MCF 10A (cell line): ENCODE measurements at regions of chr7 and their contacts with region 1.

Region 1: GRCh38 chr7:24812310-24812945 is 55.2 kb upstream of the GSDME start:
- DNase-seq: peak; percentile 60
- H3K4me3 Mint-ChIP-seq: no peak overlapping the region
- H3K27ac Mint-ChIP-seq: no peak overlapping the region
- H3K4me1 Mint-ChIP-seq: peaks cover 3% of the 10 kb centered on the region
- H3K27me3 Mint-ChIP-seq: no peaks in the 10 kb centered on the region
- CTCF ChIP-seq: peak; percentile 82

Region 2: DNA sequence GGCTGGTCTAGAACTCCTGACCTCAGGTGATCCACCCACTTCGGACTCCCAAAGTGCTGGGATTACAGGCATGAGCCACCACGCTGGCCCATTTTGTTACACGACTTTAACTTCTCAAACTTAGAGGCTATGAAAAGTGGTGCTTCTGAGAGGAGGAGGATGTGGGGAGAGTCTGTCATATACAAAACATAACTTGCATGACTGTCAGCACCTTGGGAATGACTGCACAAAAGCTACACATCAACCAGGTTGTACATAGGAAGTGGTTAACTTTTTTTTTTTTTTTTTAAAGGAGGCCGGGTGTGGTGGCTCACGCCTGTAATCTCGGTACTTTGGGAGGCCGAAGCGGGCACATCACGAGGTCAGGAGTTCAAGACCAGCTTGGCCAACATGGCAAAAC is 11.8 kb before region 1 on chr7:
- CTCF ChIA-PET with region 1: interaction called, 27 read pairs
- POLR2A ChIA-PET with region 1: interaction called, 4 read pairs
- intact Hi-C with region 1: no loop called
- DNase-seq: no peak
- H3K4me3 Mint-ChIP-seq: no peak overlapping the region
- H3K27ac Mint-ChIP-seq: no peak overlapping the region
- H3K4me1 Mint-ChIP-seq: no peaks in the 10 kb centered on the region
- H3K27me3 Mint-ChIP-seq: no peaks in the 10 kb centered on the region
- CTCF ChIP-seq: no peak

Region 3: GRCh38 chr7:24825931-24826661 is 13.7 kb after region 1 on chr7:
- CTCF ChIA-PET with region 1: interaction called, 24 read pairs
- POLR2A ChIA-PET with region 1: interaction called, 7 read pairs
- intact Hi-C with region 1: no loop called
- DNase-seq: peak; percentile 94
- H3K4me3 Mint-ChIP-seq: peak overlapping the region; percentile 54
- H3K27ac Mint-ChIP-seq: peak overlapping the region; percentile 88
- H3K4me1 Mint-ChIP-seq: peaks cover 62% of the 10 kb centered on the region
- H3K27me3 Mint-ChIP-seq: no peaks in the 10 kb centered on the region
- CTCF ChIP-seq: no peak

Region 4: GRCh38 chr7:24869572-24869971 is 57.1 kb after region 1 on chr7:
- CTCF ChIA-PET with region 1: no interaction called
- POLR2A ChIA-PET with region 1: no interaction called
- intact Hi-C with region 1: no loop called
- DNase-seq: no peak
- H3K4me3 Mint-ChIP-seq: no peak overlapping the region
- H3K27ac Mint-ChIP-seq: no peak overlapping the region
- H3K4me1 Mint-ChIP-seq: no peaks in the 10 kb centered on the region
- H3K27me3 Mint-ChIP-seq: no peaks in the 10 kb centered on the region
- CTCF ChIP-seq: no peak

Region 5: DNA sequence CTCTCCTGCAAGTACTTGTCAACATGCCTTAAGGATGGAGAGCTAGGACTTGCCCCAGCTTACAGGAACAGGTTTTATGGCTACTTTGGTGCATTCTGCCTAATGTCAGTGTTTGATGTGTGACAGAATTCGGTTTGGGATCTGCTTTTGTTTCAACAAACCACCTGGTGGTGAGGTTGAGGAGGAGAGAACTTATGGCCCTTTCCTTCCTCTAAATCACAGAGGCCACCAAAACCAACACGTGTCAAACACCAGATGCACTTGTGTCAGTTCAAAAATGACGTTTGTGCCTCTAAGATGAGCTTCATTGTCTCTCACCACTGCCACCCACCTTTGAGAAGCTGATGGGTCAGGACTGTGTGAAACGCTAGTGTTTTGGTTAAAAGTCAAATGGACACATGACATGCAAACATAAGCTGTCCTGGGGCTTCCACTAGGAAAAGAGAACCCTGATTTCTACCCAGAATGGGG is 83.6 kb after region 1 on chr7:
- CTCF ChIA-PET with region 1: interaction called, 11 read pairs
- POLR2A ChIA-PET with region 1: no interaction called
- intact Hi-C with region 1: no loop called
- DNase-seq: no peak
- H3K4me3 Mint-ChIP-seq: no peak overlapping the region
- H3K27ac Mint-ChIP-seq: no peak overlapping the region
- H3K4me1 Mint-ChIP-seq: peaks cover 20% of the 10 kb centered on the region
- H3K27me3 Mint-ChIP-seq: no peaks in the 10 kb centered on the region
- CTCF ChIP-seq: no peak

Region 6: GRCh38 chr7:24991353-24991752 is 178.9 kb after region 1 on chr7:
- CTCF ChIA-PET with region 1: interaction called, 11 read pairs
- POLR2A ChIA-PET with region 1: interaction called, 3 read pairs
- intact Hi-C with region 1: no loop called
- DNase-seq: no peak
- H3K4me3 Mint-ChIP-seq: no peak overlapping the region
- H3K27ac Mint-ChIP-seq: no peak overlapping the region
- H3K4me1 Mint-ChIP-seq: no peaks in the 10 kb centered on the region
- H3K27me3 Mint-ChIP-seq: no peaks in the 10 kb centered on the region
- CTCF ChIP-seq: no peak

Region 7: GRCh38 chr7:25054819-25055519 is 242.5 kb after region 1 on chr7:
- CTCF ChIA-PET with region 1: interaction called, 10 read pairs
- POLR2A ChIA-PET with region 1: no interaction called
- intact Hi-C with region 1: no loop called
- DNase-seq: no peak
- H3K4me3 Mint-ChIP-seq: no peak overlapping the region
- H3K27ac Mint-ChIP-seq: no peak overlapping the region
- H3K4me1 Mint-ChIP-seq: peaks cover 9% of the 10 kb centered on the region
- H3K27me3 Mint-ChIP-seq: no peaks in the 10 kb centered on the region
- CTCF ChIP-seq: no peak

Region 8: GRCh38 chr7:25069900-25070443 is 257.5 kb after region 1 on chr7:
- CTCF ChIA-PET with region 1: interaction called, 34 read pairs
- POLR2A ChIA-PET with region 1: no interaction called
- intact Hi-C with region 1: loop called (anchors 1 kb)
- DNase-seq: peak; percentile 70
- H3K4me3 Mint-ChIP-seq: no peak overlapping the region
- H3K27ac Mint-ChIP-seq: no peak overlapping the region
- H3K4me1 Mint-ChIP-seq: peaks cover 8% of the 10 kb centered on the region
- H3K27me3 Mint-ChIP-seq: no peaks in the 10 kb centered on the region
- CTCF ChIP-seq: peak; percentile 85